ENCODE measurements at regions of chr18 and their contacts with region 1.

Region 1: DNA sequence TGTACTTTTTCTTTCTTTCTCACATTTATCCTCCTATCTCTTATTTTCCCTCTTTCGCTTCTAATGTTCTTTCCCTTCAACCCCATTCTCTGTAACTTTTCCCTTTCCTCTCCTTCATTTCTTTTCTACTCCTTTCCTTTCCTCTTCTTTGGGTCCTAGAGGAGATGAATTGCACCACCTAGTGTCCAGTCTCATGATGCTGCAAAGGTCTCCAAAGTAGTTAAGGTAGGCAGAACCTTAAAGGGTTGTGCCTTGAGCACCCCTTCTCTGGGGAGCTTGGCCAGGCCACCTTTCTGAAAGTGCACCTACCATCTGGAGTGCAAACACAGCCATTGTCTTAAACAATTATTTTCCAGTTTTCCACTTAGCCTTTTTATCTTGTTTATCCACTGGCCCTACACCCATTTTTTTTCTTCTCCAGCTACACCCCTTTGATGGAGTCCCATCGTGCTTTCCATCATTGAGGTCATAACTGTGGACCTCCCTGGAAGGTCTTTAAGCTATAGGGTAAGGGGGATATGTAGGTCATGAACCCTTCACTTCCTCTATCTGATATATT is 156.0 kb downstream of the ESCO1 start:
- DNase-seq: no peak
- ATAC-seq: peak in 3 of 4 donors; percentile 57 to 78 (median 69)
- H3K4me3 ChIP-seq: no peak overlapping the region
- H3K27ac ChIP-seq: no peak overlapping the region
- H3K4me1 ChIP-seq: peaks cover 0 to 6% (median 0%) of the 10 kb centered on the region in 12 donors
- H3K27me3 ChIP-seq: no peaks in the 10 kb centered on the region
- CTCF ChIP-seq: peak; percentile 38 to 70 (median 60)
- POLR2A ChIP-seq: no peak

Region 2: GRCh38 chr18:21155443-21155842 is 289.1 kb before region 1 on chr18:
- intact Hi-C with region 1: no loop called
- DNase-seq: no peak
- ATAC-seq: no peak
- H3K4me3 ChIP-seq: no peak overlapping the region
- H3K27ac ChIP-seq: no peak overlapping the region
- H3K4me1 ChIP-seq: no peaks in the 10 kb centered on the region
- H3K27me3 ChIP-seq: no peaks in the 10 kb centered on the region
- CTCF ChIP-seq: no peak
- POLR2A ChIP-seq: no peak

Region 3: DNA sequence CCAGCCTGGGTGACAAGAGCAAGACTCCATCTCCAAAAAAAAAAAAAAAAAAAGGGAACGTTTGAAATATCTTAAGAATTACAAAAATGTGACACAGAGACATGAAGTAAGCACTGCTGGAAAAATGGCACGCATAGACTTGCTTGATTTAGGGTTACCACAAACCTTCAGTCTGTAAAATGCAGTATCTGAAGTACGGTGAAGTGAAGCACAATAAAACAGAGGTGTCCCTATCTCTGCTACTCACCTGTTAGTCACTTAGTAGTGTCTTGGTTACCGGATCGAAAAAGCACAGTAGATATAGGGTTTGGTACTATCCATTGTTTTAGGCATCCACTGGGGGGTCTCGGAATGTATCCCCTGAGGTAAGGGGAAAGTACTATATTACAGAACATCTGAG is 214.1 kb before region 1 on chr18:
- intact Hi-C with region 1: loop called in 2 of 10 experiments (anchors 10 kb)
- DNase-seq: no peak
- ATAC-seq: no peak
- H3K4me3 ChIP-seq: no peak overlapping the region
- H3K27ac ChIP-seq: no peak overlapping the region
- H3K4me1 ChIP-seq: no peaks in the 10 kb centered on the region
- H3K27me3 ChIP-seq: no peaks in the 10 kb centered on the region
- CTCF ChIP-seq: no peak
- POLR2A ChIP-seq: no peak

Region 4: GRCh38 chr18:21242141-21242779 is 202.3 kb before region 1 on chr18 and contains the start of gene GREB1L:
- intact Hi-C with region 1: loop called in 6 of 10 experiments (anchors 2 to 10 kb)
- DNase-seq: peak; percentile 50 to 78 (median 70)
- ATAC-seq: peak; percentile 86 to 95 (median 92)
- H3K4me3 ChIP-seq: peak within 1 kb of the TSS; percentile 41 to 82 (median 61)
- H3K27ac ChIP-seq: peak within 1 kb of the TSS; percentile 20 to 86 (median 69)
- H3K4me1 ChIP-seq: peaks cover 0 to 18% (median 0%) of the 10 kb centered on the region in 12 donors
- H3K27me3 ChIP-seq: peaks cover 0 to 66% (median 15%) of the 10 kb centered on the region in 9 donors
- CTCF ChIP-seq: peak in 8 of 12 donors; percentile 24 to 52 (median 38)
- POLR2A ChIP-seq: peak in 1 of 2 donors; percentile 19
- total RNA-seq, gene GREB1L: 7.5 to 21.5 (median 10.6) TPM

Region 5: GRCh38 chr18:21361307-21361880 is 83.2 kb before region 1 on chr18:
- intact Hi-C with region 1: loop called in 1 of 10 experiments (anchors 10 kb)
- DNase-seq: no peak
- ATAC-seq: peak in 1 of 4 donors; percentile 41
- H3K4me3 ChIP-seq: no peak overlapping the region
- H3K27ac ChIP-seq: peak overlapping the region in 1 of 12 donors; percentile 2
- H3K4me1 ChIP-seq: peaks cover 0 to 6% (median 0%) of the 10 kb centered on the region in 12 donors
- H3K27me3 ChIP-seq: no peaks in the 10 kb centered on the region
- CTCF ChIP-seq: no peak
- POLR2A ChIP-seq: no peak

Region 6: DNA sequence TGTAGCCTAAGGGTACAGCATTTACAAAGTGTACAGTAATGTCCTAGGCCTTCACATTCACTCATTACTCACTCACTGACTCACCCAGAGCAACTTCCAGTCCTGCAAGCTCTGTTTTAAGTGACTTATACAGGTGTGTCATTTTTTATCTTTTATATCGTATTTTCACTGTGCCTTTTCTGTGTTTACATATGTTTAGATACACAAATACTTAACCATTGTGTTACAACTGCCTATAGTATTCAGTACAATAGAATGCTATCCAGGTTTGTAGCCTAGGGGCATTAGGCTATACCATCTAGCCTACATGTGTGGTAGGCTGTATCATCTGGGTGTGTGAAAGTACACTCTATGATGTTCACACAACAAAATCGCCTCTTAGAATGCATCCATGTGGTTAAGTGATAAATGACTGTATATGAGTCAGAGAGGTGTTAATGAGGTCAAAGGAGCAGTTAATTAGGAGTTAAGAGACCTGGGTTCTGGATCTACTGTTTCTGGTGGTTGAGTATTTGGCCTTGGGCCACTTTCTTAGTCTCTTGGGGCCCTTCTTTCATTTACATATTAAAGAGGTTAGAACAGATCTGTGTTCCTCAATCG is 53.4 kb before region 1 on chr18:
- intact Hi-C with region 1: loop called in 2 of 10 experiments (anchors 10 kb)
- DNase-seq: no peak
- ATAC-seq: no peak
- H3K4me3 ChIP-seq: no peak overlapping the region
- H3K27ac ChIP-seq: no peak overlapping the region
- H3K4me1 ChIP-seq: peaks cover 0 to 7% (median 0%) of the 10 kb centered on the region in 12 donors
- H3K27me3 ChIP-seq: no peaks in the 10 kb centered on the region
- CTCF ChIP-seq: no peak
- POLR2A ChIP-seq: no peak

Region 7: DNA sequence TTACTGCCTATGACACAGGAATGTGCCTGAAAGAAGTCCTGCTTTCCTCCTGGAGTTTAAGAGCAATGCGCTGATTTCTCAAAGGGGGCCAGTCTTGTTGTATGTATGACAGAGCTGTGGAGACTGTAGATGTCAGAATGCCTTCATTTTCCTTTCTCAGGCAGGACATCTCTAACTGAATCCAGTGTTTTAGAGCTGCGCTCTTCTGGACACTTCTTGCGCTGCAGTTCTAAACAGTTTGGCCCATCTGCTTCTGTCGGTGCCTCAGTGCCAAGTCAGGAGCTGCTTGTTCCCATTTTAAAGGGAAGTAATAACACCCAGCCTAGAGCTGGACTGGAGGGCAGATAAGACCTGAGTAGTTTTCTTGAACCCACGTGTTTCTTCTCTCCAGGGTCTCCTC is 64.5 kb after region 1 on chr18:
- intact Hi-C with region 1: loop called in 1 of 10 experiments (anchors 10 kb)
- DNase-seq: no peak
- ATAC-seq: no peak
- H3K4me3 ChIP-seq: no peak overlapping the region
- H3K27ac ChIP-seq: no peak overlapping the region
- H3K4me1 ChIP-seq: no peaks in the 10 kb centered on the region
- H3K27me3 ChIP-seq: no peaks in the 10 kb centered on the region
- CTCF ChIP-seq: no peak
- POLR2A ChIP-seq: no peak

Region 8: GRCh38 chr18:22694954-22695353 is 1250.4 kb after region 1 on chr18:
- intact Hi-C with region 1: no loop called
- DNase-seq: peak in 4 of 5 donors; percentile 22 to 70 (median 44)
- ATAC-seq: peak in 3 of 4 donors; percentile 56 to 86 (median 59)
- H3K4me3 ChIP-seq: peak overlapping the region in 1 of 12 donors; percentile 3
- H3K27ac ChIP-seq: no peak overlapping the region
- H3K4me1 ChIP-seq: no peaks in the 10 kb centered on the region
- H3K27me3 ChIP-seq: no peaks in the 10 kb centered on the region
- CTCF ChIP-seq: no peak
- POLR2A ChIP-seq: no peak

Measured in heart left ventricle (tissue), 16 donors.